Common myeloid progenitor, CD34-positive (primary cell): ENCODE measurements at regions of chr11 and their contacts with region 1.

Region 1: GRCh38 chr11:36131721-36132397 is 157.4 kb downstream of the COMMD9 start:
- DNase-seq: peak; percentile 58 to 78 (median 71)
- H3K4me3 ChIP-seq: no peak overlapping the region
- H3K27ac ChIP-seq: no peak overlapping the region
- H3K4me1 ChIP-seq: peaks cover 0 to 5% (median under 1%) of the 10 kb centered on the region in 4 experiments
- H3K27me3 ChIP-seq: peaks cover 0 to 14% (median 0%) of the 10 kb centered on the region in 5 experiments

Region 2: DNA sequence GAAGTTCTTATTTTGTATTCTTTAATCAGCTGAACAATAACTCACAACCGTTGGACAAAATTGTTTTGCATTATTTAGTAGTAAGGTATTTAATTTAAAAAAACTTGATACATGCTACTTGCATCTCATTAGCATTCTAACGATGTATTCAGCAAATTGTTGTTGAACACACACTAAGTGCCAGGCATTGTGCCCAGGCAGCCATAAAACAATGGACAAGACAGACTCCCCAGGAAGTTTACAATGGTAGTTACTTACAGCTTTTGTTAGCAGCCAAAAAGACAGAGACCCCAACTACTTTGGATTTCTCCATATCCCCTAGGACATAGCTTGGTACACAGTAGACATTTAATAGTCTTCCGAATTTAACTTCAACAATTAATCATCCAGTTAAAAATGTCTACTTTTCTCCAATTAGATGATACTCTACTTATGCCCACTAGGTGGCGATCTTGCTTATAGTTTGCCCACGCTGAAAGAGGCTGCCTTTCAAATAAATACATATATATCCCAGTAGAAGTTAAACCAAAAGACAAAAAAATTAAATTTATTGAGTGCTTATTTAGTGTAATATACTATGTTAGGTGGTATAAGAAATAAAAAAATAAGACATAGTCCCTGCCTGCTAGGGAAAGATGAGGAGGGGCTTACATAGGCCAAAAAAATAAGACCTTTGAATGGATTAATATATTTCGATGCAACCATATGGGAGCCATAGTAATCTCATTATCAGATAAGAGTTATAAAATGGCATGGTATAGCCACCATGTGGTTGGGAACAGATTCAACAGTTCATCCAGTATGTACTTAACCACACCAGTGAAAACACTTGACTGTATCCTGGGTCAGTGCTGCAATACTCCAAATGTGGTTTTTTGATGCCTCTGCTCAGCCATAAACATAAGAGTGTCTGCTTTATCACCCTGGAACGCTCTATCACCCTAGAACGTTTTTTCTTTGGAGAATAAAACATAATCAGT is 515.6 kb before region 1 on chr11:
- CTCF ChIA-PET with region 1: interaction called, 11 read pairs
- POLR2A ChIA-PET with region 1: no interaction called
- DNase-seq: peak; percentile 63 to 80 (median 80)
- H3K4me3 ChIP-seq: no peak overlapping the region
- H3K27ac ChIP-seq: no peak overlapping the region
- H3K4me1 ChIP-seq: peaks cover 0 to 36% (median 26%) of the 10 kb centered on the region in 4 experiments
- H3K27me3 ChIP-seq: peaks cover 3 to 64% (median 13%) of the 10 kb centered on the region in 5 experiments

Region 3: DNA sequence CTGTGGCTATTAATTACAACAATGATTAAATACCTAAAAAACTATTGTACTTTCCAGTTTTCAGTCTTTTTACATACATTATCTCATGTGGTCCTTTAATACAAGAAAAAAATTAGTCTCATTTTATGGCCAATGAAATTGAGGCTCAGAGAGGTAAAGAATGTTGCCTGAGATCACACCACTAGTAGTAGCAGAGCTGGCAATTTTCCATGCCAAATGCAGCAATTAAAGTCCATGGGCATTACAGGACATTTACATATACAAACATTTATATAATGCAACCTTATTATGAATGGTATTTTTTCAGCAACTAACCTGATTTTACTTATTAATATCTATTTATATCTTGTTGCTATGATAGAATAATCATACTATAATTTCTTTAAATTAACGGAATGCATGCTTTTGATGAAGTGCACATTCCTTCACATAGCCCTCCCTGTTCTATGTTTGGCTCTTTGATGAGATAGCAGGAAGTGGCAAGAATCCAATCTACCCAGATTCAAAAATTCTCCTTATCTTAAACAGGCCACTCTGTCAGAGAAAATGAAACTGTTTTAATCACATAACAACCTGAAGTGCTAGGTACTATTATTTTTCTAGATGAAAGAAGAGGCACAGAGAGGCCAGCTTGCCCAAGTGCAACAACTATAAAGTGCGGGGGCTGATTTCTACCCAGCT is 308.9 kb before region 1 on chr11:
- CTCF ChIA-PET with region 1: interaction called, 26 read pairs
- POLR2A ChIA-PET with region 1: no interaction called
- DNase-seq: peak in 2 of 3 donors; percentile 18 to 30
- H3K4me3 ChIP-seq: no peak overlapping the region
- H3K27ac ChIP-seq: no peak overlapping the region
- H3K4me1 ChIP-seq: peaks cover 0 to 5% (median 2%) of the 10 kb centered on the region in 4 experiments
- H3K27me3 ChIP-seq: no peaks in the 10 kb centered on the region

Region 4: GRCh38 chr11:36041988-36042611 is 89.8 kb before region 1 on chr11:
- CTCF ChIA-PET with region 1: interaction called, 78 read pairs
- POLR2A ChIA-PET with region 1: no interaction called
- DNase-seq: peak; percentile 29 to 74 (median 65)
- H3K4me3 ChIP-seq: no peak overlapping the region
- H3K27ac ChIP-seq: no peak overlapping the region
- H3K4me1 ChIP-seq: peaks cover 0 to 18% (median 9%) of the 10 kb centered on the region in 4 experiments
- H3K27me3 ChIP-seq: peaks cover 0 to 2% (median 0%) of the 10 kb centered on the region in 5 experiments

Region 5: DNA sequence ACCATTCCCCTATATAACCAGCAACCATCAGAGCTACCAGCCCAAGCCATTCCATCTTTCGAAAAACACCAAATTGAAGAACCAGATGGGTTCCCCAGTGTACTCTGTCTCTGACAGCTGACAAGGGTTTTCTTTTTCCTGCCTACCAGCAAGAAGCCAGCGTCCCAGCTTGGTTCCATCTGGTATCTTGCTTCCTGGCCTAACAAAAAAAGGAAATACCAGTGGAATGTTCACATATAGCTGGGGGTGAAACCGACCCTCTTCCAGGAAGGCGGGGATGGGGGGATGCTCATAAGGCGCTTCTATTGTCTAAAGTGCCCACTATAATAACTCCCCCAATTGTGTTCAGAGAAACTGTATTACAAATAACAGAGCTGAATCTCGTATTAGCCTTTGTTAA is 15.7 kb before region 1 on chr11:
- CTCF ChIA-PET with region 1: interaction called, 19 read pairs
- POLR2A ChIA-PET with region 1: no interaction called
- DNase-seq: peak in 1 of 3 donors; percentile 9
- H3K4me3 ChIP-seq: no peak overlapping the region
- H3K27ac ChIP-seq: no peak overlapping the region
- H3K4me1 ChIP-seq: peaks cover 0 to 4% (median 2%) of the 10 kb centered on the region in 4 experiments
- H3K27me3 ChIP-seq: no peaks in the 10 kb centered on the region

Region 6: DNA sequence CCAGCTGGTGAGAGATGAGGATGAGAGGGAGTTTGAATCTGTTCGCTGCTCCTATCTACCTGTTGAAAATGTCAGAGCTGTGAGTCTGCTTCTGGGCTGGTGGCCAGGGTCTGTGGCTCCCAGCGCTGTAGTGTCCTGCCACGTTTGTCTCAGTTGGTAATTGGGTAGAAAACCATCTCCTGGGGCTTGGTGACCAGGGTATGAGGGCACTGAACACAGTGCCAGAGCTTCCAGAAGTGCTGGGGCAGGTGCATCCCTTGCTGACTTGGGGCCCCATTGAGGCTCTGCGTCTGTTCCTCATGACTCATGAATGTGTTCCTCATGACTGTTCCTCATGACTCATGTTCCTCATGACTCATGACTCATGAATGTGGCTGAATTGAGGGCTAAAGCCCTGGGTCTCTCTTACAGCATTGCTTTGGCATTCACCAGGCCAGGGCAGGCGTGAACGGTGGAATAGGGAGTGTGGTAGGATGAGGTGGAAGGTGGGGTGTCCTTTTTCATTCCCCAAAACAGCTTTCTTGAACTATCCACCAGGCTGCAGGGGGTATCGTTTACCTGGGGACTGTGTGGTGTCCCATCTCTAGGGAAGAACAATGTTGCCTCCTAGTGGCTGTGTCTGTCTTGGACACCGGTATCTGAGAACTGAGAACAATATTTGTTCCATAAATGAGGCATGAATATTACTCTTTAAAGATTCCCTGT is 17.8 kb after region 1 on chr11:
- CTCF ChIA-PET with region 1: interaction called, 16 read pairs
- POLR2A ChIA-PET with region 1: no interaction called
- DNase-seq: peak; percentile 94 to 98 (median 97)
- H3K4me3 ChIP-seq: peak overlapping the region in 1 of 7 experiments; percentile 6
- H3K27ac ChIP-seq: peak overlapping the region in 1 of 2 experiments; percentile 46
- H3K4me1 ChIP-seq: peaks cover 0 to 20% (median 10%) of the 10 kb centered on the region in 4 experiments
- H3K27me3 ChIP-seq: peaks cover 0 to 11% (median 0%) of the 10 kb centered on the region in 5 experiments

Region 7: DNA sequence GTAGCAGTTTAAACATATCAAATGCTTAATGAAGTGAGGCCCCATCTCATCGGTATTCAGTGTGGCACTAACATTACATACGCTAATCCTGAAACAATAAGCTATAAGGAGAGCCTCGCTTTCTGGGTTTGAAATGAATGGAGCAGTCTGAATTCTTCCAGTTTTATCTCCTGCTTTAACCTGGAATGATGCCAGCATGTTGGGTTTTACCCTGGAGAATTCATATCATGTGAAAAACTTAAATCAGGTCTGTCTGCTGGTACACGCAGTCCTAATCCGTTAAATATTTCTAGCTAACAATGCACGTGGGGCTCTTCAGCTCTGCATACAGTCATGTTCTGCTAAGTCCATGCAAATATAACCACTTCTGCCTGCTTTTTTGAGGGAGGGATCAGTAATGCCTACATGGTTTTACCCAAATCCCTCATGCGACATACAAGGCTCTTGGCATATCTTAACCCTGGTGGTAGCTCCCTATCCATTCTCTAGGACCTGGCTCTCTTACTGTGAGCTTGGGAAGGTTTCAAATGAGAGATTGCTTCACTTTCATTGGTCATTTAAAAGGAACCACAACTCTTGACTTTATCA is 64.6 kb after region 1 on chr11:
- CTCF ChIA-PET with region 1: no interaction called
- POLR2A ChIA-PET with region 1: no interaction called
- DNase-seq: no peak
- H3K4me3 ChIP-seq: no peak overlapping the region
- H3K27ac ChIP-seq: no peak overlapping the region
- H3K4me1 ChIP-seq: no peaks in the 10 kb centered on the region
- H3K27me3 ChIP-seq: peaks cover 0 to 2% (median 0%) of the 10 kb centered on the region in 5 experiments

Region 8: GRCh38 chr11:36258730-36259360 is 127.0 kb after region 1 on chr11:
- CTCF ChIA-PET with region 1: interaction called, 12 read pairs
- POLR2A ChIA-PET with region 1: no interaction called
- DNase-seq: peak; percentile 48 to 70 (median 68)
- H3K4me3 ChIP-seq: no peak overlapping the region
- H3K27ac ChIP-seq: no peak overlapping the region
- H3K4me1 ChIP-seq: peaks cover 0 to 3% (median 0%) of the 10 kb centered on the region in 4 experiments
- H3K27me3 ChIP-seq: peaks cover 0 to 54% (median 7%) of the 10 kb centered on the region in 5 experiments